ENCODE measurements at regions of chr4 and their contacts with region 1.

Region 1: GRCh38 chr4:84750253-84750959 is 167.5 kb downstream of the CDS1 start:
- DNase-seq: peak; percentile 53
- H3K4me3 ChIP-seq: no peak overlapping the region; a peak in 1 of 4 replicates
- H3K27ac ChIP-seq: peak overlapping the region in 1 of 2 experiments; percentile 65; a peak in 2 of 4 replicates
- H3K4me1 ChIP-seq: peaks cover 0 to 6% of the 10 kb centered on the region in 2 experiments; a peak in 2 of 4 replicates
- H3K27me3 ChIP-seq: no peaks in the 10 kb centered on the region
- CTCF ChIP-seq: peak; percentile 81
- EP300 ChIP-seq: peak in 1 of 2 experiments; percentile 5; a peak in 1 of 4 replicates
- RAD21 ChIP-seq: peak; percentile 80

Region 2: DNA sequence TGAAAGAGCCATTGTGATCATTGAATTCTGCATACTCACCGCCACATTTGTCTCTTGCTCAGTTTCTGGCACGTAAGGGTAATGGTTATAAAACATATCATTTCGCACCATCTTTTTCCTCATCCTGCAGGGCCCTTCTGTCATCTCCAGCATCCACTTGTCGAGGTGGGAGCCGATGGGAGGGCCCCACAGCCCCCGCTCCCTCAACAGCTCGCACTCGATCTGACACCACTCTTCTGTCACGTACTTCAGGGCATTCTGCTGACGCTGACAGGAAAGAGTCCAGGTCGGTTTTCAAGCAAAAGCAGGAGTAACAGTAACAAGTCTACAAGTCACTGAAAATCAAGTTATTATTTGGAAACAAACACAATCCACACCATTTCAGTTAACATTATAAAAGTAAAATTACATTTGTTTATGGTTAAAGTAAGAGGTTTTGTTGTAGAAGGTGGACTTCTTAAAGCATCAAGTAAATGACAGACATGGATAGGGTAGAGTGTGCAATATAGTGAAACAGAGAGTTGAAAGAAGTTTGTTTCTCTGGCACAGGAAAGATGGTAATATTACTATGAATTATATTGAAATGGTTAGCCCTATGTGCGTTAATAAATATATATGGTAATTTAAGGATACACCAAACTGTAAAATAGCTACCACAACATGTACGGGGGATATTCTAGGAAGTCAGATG is 16.9 kb before region 1 on chr4:
- CTCF ChIA-PET with region 1: interaction called, 34 read pairs
- POLR2A ChIA-PET with region 1: no interaction called
- DNase-seq: no peak
- H3K4me3 ChIP-seq: no peak overlapping the region
- H3K27ac ChIP-seq: no peak overlapping the region
- H3K4me1 ChIP-seq: no peaks in the 10 kb centered on the region
- H3K27me3 ChIP-seq: no peaks in the 10 kb centered on the region
- CTCF ChIP-seq: no peak
- EP300 ChIP-seq: no peak
- RAD21 ChIP-seq: no peak

Region 3: DNA sequence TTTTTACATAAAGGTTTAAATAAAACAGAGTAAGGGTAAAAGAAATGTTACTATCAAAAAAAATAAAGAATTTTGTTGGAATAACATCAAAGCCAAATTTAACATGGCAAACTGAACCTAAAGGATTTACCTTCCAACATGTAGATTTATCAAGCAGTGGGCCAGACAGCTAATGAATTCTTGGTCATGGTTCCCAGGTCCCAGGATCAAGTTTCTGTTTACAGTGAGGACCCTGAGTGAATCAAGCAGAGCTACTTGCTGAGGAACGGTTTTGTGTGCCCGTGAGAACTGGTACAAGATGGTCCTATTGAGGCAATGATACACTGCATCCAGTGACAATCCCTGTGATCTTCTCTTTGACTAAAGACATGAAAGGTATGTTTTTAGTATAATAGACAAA is 10.3 kb before region 1 on chr4:
- CTCF ChIA-PET with region 1: interaction called, 34 read pairs
- POLR2A ChIA-PET with region 1: no interaction called
- DNase-seq: no peak
- H3K4me3 ChIP-seq: no peak overlapping the region
- H3K27ac ChIP-seq: no peak overlapping the region
- H3K4me1 ChIP-seq: no peaks in the 10 kb centered on the region; a peak in 1 of 4 replicates
- H3K27me3 ChIP-seq: no peaks in the 10 kb centered on the region
- CTCF ChIP-seq: no peak
- EP300 ChIP-seq: no peak
- RAD21 ChIP-seq: no peak

Region 4: GRCh38 chr4:84966383-84967242 is 216.2 kb after region 1 on chr4 and contains the start of gene WDFY3:
- CTCF ChIA-PET with region 1: interaction called, 65 read pairs
- POLR2A ChIA-PET with region 1: interaction called, 5 read pairs
- DNase-seq: peak; percentile 88
- H3K4me3 ChIP-seq: peak within 1 kb of the TSS; percentile 78 to 90
- H3K27ac ChIP-seq: peak within 1 kb of the TSS; percentile 80 to 95
- H3K4me1 ChIP-seq: peaks cover 6 to 8% of the 10 kb centered on the region in 2 experiments; a peak in 3 of 4 replicates
- H3K27me3 ChIP-seq: no peaks in the 10 kb centered on the region
- CTCF ChIP-seq: no peak
- EP300 ChIP-seq: no peak
- RAD21 ChIP-seq: peak; percentile 27; the same call in 1 of the 2 replicates
- polyA plus RNA-seq, gene WDFY3: 13.8 and 17.4 TPM in 2 replicates

Region 5: GRCh38 chr4:84973856-84974255 is 223.4 kb after region 1 on chr4:
- CTCF ChIA-PET with region 1: interaction called, 65 read pairs
- POLR2A ChIA-PET with region 1: no interaction called
- DNase-seq: no peak
- H3K4me3 ChIP-seq: no peak overlapping the region
- H3K27ac ChIP-seq: no peak overlapping the region
- H3K4me1 ChIP-seq: no peaks in the 10 kb centered on the region; a peak in 2 of 4 replicates
- H3K27me3 ChIP-seq: no peaks in the 10 kb centered on the region
- CTCF ChIP-seq: no peak
- EP300 ChIP-seq: no peak
- RAD21 ChIP-seq: no peak

Measured in SK-N-SH (cell line).